MCF 10A (cell line): ENCODE measurements at regions of chr4 and their contacts with region 1.

Region 1: DNA sequence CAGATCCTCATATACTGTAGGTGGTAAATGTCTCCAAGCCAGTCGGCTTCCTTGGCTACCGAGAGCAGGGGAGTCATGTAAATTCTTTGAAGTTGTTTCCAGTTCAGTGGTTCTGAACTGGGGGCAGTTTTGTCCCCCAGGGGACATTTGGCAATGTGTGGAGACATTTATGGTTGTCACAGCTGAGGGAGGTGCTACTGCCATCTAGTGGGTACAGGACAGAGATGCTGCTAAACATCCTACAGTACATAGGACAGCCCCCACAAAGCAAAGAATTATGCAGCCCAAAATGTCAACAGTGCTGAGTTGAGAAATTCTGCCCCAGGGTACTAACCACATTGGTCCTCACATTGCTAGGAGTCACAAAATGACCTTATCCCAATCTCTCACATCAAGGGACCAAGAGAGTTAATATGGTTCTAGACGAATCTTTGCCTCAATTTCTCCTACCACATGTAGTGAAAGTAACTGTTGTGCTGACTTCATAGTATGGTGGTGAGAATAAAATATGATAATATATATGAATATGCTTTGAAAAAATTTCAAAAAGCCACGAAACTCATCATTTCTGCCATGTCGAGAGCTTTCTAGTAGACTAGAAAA is 104.4 kb upstream of the ARHGAP24 start:
- DNase-seq: peak; percentile 68
- H3K4me3 Mint-ChIP-seq: no peak overlapping the region
- H3K27ac Mint-ChIP-seq: no peak overlapping the region
- H3K4me1 Mint-ChIP-seq: no peaks in the 10 kb centered on the region
- H3K27me3 Mint-ChIP-seq: no peaks in the 10 kb centered on the region
- CTCF ChIP-seq: peak; percentile 84

Region 2: DNA sequence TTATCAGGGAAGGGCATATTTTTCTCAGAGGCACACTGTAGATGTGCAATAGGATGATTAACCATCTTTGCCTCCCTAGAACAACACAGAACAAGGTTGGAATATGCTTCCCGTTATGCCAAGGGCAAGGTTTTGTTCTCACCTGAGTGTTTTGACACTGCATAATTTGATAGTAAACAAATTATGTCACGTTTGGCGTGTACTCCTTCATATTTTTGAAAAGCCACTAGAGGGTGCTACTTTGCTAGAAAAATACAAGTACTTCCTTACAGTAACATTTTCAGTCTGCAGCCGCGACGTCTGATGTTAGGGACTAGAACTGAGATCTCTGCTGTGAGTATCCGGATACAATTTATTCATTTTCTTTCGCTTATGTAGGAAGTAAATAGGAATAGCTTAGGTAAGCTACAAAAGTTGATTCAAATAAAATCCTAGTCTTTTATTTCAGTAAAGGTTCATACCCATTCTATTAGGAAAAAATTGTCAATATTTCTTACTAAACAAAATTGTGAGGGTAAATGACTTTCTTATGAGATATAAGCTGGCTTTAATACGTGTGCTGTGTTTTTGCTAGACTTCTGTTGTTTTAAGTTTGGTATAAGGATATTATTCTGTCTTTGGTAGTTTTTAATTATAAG is 223.0 kb before region 1 on chr4:
- CTCF ChIA-PET with region 1: interaction called, 86 read pairs
- POLR2A ChIA-PET with region 1: interaction called, 5 read pairs
- intact Hi-C with region 1: loop called (anchors 1 kb)
- DNase-seq: peak; percentile 74
- H3K4me3 Mint-ChIP-seq: no peak overlapping the region
- H3K27ac Mint-ChIP-seq: no peak overlapping the region
- H3K4me1 Mint-ChIP-seq: peaks cover 11% of the 10 kb centered on the region
- H3K27me3 Mint-ChIP-seq: no peaks in the 10 kb centered on the region
- CTCF ChIP-seq: peak; percentile 68

Region 3: GRCh38 chr4:85302756-85303155 is 67.8 kb before region 1 on chr4:
- CTCF ChIA-PET with region 1: no interaction called
- POLR2A ChIA-PET with region 1: no interaction called
- intact Hi-C with region 1: no loop called
- DNase-seq: no peak
- H3K4me3 Mint-ChIP-seq: no peak overlapping the region
- H3K27ac Mint-ChIP-seq: no peak overlapping the region
- H3K4me1 Mint-ChIP-seq: no peaks in the 10 kb centered on the region
- H3K27me3 Mint-ChIP-seq: no peaks in the 10 kb centered on the region
- CTCF ChIP-seq: no peak

Region 4: GRCh38 chr4:85358831-85359470 is 11.6 kb before region 1 on chr4:
- CTCF ChIA-PET with region 1: interaction called, 25 read pairs
- POLR2A ChIA-PET with region 1: interaction called, 8 read pairs
- intact Hi-C with region 1: no loop called
- DNase-seq: peak; percentile 9
- H3K4me3 Mint-ChIP-seq: no peak overlapping the region
- H3K27ac Mint-ChIP-seq: no peak overlapping the region
- H3K4me1 Mint-ChIP-seq: no peaks in the 10 kb centered on the region
- H3K27me3 Mint-ChIP-seq: no peaks in the 10 kb centered on the region
- CTCF ChIP-seq: no peak

Region 5: DNA sequence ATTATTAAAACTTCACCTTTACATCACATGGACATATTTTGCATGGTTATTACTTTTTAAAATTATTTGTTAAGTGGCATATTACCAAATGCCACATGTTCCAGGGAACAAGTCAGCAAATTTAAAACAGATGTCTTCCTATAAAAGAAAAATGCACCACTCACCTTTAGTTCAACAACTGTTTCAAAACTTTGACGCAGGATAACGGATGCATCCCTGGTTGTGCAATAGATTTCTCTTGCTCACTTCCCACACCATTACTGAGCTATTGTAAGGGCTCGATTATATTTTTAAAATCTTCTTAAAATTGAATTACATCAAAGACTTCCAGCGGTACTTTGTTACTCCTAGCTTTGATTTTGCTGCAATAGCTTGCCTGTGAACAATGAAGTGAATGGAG is 11.4 kb after region 1 on chr4:
- CTCF ChIA-PET with region 1: interaction called, 11 read pairs
- POLR2A ChIA-PET with region 1: interaction called, 3 read pairs
- intact Hi-C with region 1: no loop called
- DNase-seq: no peak
- H3K4me3 Mint-ChIP-seq: no peak overlapping the region
- H3K27ac Mint-ChIP-seq: no peak overlapping the region
- H3K4me1 Mint-ChIP-seq: no peaks in the 10 kb centered on the region
- H3K27me3 Mint-ChIP-seq: no peaks in the 10 kb centered on the region
- CTCF ChIP-seq: no peak

Region 6: GRCh38 chr4:85409251-85409650 is 38.7 kb after region 1 on chr4:
- CTCF ChIA-PET with region 1: no interaction called
- POLR2A ChIA-PET with region 1: no interaction called
- intact Hi-C with region 1: no loop called
- DNase-seq: no peak
- H3K4me3 Mint-ChIP-seq: no peak overlapping the region
- H3K27ac Mint-ChIP-seq: no peak overlapping the region
- H3K4me1 Mint-ChIP-seq: no peaks in the 10 kb centered on the region
- H3K27me3 Mint-ChIP-seq: no peaks in the 10 kb centered on the region
- CTCF ChIP-seq: no peak